BJ (cell line): ENCODE measurements at regions of chr5 and their contacts with region 1.

Region 1: DNA sequence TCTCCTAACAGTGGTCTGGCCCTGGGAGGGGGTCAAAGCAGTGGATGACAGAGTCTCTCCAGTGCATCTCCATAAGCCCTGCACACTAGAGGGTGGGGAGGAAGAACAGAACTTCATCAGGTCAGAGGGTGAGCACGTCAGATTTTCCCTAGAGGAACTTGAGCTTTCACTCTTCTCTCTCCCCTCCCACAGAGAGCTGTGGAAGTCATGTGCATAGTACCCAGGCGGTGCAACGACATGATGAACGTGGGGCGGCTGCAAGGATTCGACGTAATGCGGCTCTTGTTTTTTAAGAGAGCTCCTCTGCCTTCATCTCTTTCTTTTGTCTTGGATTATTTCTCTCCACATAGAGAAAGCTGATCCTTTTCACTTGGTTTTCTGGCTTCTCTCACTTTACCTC is 100.2 kb upstream of the OTULINL start:
- DNase-seq: no peak
- H3K4me3 ChIP-seq: no peak overlapping the region
- H3K27me3 ChIP-seq: no peaks in the 10 kb centered on the region
- CTCF ChIP-seq: no peak

Region 2: GRCh38 chr5:14286574-14287421 is 194.6 kb before region 1 on chr5:
- CTCF ChIA-PET with region 1: no interaction called
- POLR2A ChIA-PET with region 1: no interaction called
- DNase-seq: no peak
- H3K4me3 ChIP-seq: no peak overlapping the region
- H3K27me3 ChIP-seq: no peaks in the 10 kb centered on the region
- CTCF ChIP-seq: no peak

Region 3: DNA sequence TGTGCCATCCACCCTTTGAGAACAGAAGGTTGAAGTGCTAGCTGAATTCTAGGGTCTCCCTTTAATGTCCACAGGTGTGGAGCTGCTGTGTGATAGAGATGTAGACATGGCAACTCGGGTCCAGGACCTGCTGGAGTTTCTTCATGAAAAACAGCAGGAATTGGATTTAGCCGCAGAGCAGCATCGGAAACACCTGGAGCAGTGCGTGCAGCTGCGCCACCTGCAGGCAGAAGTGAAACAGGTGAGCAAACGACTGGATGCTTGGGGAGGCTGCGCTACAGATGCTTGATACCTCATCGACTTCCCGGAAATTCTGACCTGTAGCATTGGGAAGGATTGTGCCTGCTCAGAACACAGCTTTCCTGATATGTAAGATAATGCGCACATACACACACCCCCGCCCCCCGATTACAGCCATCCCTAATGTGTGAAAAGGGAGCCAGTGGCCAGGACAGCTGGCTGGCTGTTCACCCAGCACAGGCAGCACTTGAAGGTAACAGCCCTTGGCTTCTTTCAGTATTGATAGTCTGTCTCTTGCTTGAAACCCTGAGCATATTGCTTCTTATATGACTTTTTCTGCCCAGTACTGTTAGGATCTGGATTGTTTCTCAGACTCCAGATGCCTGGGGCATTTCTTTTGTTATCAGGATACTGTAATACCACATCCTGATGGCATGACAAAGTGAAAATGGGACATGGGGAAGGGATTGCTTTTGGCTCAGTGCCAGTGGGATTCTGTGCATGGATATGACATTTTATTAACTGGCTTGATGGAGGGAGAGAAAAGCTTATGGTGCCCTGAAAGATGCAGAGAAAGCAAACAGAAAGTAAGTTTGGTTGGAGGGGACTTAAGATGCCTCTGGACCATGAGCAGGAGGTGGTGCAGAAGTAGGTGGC is 116.5 kb before region 1 on chr5:
- CTCF ChIA-PET with region 1: no interaction called
- POLR2A ChIA-PET with region 1: no interaction called
- DNase-seq: no peak
- H3K4me3 ChIP-seq: no peak overlapping the region
- H3K27me3 ChIP-seq: no peaks in the 10 kb centered on the region
- CTCF ChIP-seq: peak; percentile 51

Region 4: GRCh38 chr5:14463629-14464028 is 17.7 kb before region 1 on chr5:
- CTCF ChIA-PET with region 1: no interaction called
- POLR2A ChIA-PET with region 1: interaction called, 23 read pairs
- DNase-seq: no peak
- H3K4me3 ChIP-seq: no peak overlapping the region
- H3K27me3 ChIP-seq: no peaks in the 10 kb centered on the region
- CTCF ChIP-seq: no peak

Region 5: DNA sequence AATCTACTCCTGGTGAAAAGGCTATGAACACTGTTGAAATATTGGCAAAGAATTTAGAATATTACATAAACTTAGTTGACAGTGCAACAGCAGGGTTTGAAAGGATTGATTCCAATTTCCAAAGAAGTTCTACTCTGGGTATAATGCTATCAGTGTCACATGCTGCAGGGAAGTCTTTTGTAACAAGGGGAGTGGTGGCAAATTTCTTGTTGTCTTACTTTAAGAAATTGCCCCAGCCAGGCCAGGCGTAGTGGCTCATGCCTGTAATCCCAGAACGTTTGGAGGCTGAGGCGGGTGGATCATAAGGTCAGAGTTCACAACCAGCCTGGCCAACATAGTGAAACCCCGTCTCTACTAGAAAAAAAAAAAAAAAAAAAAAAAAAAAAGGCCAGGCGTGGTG is 14.0 kb after region 1 on chr5:
- CTCF ChIA-PET with region 1: no interaction called
- POLR2A ChIA-PET with region 1: interaction called, 20 read pairs
- DNase-seq: no peak
- H3K4me3 ChIP-seq: no peak overlapping the region
- H3K27me3 ChIP-seq: no peaks in the 10 kb centered on the region
- CTCF ChIP-seq: no peak

Region 6: DNA sequence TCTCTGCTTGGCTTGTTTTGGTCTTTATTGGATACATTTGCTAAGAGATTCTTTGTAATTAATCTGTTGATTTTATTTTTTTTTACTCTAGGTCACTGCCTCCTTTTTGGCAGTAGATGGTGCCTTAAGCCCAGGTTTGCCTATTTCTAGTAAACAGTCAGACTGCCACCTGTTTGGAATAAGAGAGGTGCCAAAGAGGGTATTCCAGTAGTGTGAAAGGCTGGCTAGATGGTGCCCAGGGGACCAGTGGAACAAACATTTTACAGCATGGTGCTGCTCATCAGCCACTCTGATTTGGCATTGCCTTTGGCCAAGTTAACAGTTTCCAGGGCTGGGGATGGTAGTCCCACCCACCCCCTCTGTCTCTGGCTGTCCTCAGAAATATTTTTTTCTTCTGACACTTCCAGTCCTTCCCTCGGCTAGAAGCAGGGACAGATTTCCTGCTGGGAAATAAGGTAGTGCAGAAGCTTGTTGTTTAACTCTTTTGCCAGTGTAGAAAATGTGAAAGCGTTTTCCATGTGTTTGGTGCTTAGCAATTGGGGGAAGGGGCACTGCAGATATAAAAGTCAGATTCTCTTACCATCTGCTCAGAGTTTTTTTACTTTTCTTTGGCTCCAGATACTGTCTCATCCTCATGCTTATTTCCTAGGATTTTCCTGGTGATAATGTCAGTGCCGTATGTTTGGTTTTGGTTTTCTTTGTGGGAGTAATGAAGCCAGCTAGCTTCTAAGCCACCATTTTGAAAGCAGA is 982.1 kb after region 1 on chr5:
- CTCF ChIA-PET with region 1: no interaction called
- POLR2A ChIA-PET with region 1: no interaction called
- DNase-seq: no peak
- H3K4me3 ChIP-seq: no peak overlapping the region
- H3K27me3 ChIP-seq: peaks cover 3% of the 10 kb centered on the region
- CTCF ChIP-seq: peak; percentile 65